Heart right ventricle (tissue), 16 donors: ENCODE measurements at regions of chr11 and their contacts with region 1.

Region 1: DNA sequence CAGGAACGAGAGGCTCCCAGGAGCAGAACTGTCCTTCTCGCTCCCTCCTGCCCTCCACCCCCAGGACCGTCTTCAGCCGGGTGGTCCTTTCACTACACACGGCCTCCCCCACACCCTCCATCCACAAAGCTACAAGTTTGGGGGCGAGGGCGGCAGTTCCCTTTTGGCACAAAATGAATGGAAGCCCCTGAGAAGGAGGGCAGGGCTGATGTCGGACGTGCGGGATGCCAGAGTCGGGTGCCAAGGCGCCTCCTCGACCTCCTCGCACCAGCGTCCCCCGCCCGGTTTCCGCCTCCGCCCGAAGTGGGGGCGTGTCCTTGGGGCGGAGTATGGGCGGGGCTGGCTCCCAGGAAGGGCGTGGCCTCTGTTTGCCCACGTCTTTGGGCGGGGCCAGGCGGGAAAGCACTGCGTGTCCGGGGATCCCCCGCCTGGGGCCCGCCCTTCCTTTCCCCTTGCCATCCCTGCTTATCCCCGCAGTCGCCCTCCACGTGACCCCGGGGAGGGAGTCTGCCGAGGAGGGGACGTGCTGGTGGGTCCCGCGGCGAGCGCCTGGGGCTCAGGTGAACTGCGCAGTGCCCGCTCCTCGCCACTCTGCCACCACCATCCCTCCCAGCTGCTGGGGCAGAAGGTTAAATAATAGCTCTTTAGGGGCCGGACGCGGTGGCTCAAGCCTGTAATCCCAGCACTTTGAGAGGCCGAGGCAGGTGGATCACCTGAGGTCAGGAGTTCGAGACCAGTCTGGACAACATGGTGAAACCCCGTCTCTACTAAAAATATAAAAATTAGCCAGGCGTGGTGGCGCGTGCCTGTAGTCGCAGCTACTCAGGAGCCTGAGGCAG is 937 bp upstream of the EFEMP2 start:
- DNase-seq: peak; percentile 95 to 96
- ATAC-seq: peak; percentile 91 to 97 (median 94)
- H3K4me3 ChIP-seq: peak overlapping the region; percentile 47 to 73 (median 68)
- H3K27ac ChIP-seq: peak overlapping the region; percentile 84 to 97 (median 96)
- H3K4me1 ChIP-seq: peaks cover 16 to 40% (median 29%) of the 10 kb centered on the region in 9 donors
- H3K27me3 ChIP-seq: no peaks in the 10 kb centered on the region
- CTCF ChIP-seq: no peak

Region 2: GRCh38 chr11:65083834-65084597 is 789.5 kb before region 1 on chr11 and contains the starts of genes CDCA5 and ZFPL1:
- intact Hi-C with region 1: no loop called
- DNase-seq: peak; percentile 95
- ATAC-seq: peak; percentile 94 to 98 (median 98)
- H3K4me3 ChIP-seq: peak within 1 kb of the TSS; percentile 64 to 93 (median 81)
- H3K27ac ChIP-seq: peak within 1 kb of the TSS; percentile 79 to 96 (median 92)
- H3K4me1 ChIP-seq: peaks cover 6 to 34% (median 20%) of the 10 kb centered on the region in 9 donors
- H3K27me3 ChIP-seq: no peaks in the 10 kb centered on the region
- CTCF ChIP-seq: no peak
- total RNA-seq, gene CDCA5: 0.50 to 5.3 (median 1.0) TPM
- total RNA-seq, gene ZFPL1: 21.5 to 27.7 (median 24.8) TPM

Region 3: GRCh38 chr11:65859200-65859811 is 14.2 kb before region 1 on chr11:
- intact Hi-C with region 1: loop called in 2 of 10 experiments (anchors 1 kb)
- DNase-seq: peak; percentile 99
- ATAC-seq: peak; percentile 73 to 89 (median 84)
- H3K4me3 ChIP-seq: peak overlapping the region; percentile 37 to 100 (median 99)
- H3K27ac ChIP-seq: peak overlapping the region; percentile 90 to 100 (median 98)
- H3K4me1 ChIP-seq: peaks cover 12 to 62% (median 50%) of the 10 kb centered on the region in 9 donors
- H3K27me3 ChIP-seq: no peaks in the 10 kb centered on the region
- CTCF ChIP-seq: peak in 4 of 9 donors; percentile 17 to 36 (median 22)